Sigmoid colon (tissue), 7 donors: ENCODE measurements at regions of chr18 and their contacts with region 1.

Region 1: GRCh38 chr18:63320046-63320689 is 599 bp upstream of the BCL2 start:
- DNase-seq: peak; percentile 94
- H3K4me3 ChIP-seq: peak overlapping the region; percentile 26 to 75 (median 68)
- H3K27ac ChIP-seq: peak overlapping the region; percentile 86 to 90 (median 88)
- H3K4me1 ChIP-seq: peaks cover 0 to 47% (median 33%) of the 10 kb centered on the region in 4 donors
- H3K27me3 ChIP-seq: no peaks in the 10 kb centered on the region
- CTCF ChIP-seq: no peak
- EP300 ChIP-seq: no peak
- POLR2A ChIP-seq: no peak

Region 2: DNA sequence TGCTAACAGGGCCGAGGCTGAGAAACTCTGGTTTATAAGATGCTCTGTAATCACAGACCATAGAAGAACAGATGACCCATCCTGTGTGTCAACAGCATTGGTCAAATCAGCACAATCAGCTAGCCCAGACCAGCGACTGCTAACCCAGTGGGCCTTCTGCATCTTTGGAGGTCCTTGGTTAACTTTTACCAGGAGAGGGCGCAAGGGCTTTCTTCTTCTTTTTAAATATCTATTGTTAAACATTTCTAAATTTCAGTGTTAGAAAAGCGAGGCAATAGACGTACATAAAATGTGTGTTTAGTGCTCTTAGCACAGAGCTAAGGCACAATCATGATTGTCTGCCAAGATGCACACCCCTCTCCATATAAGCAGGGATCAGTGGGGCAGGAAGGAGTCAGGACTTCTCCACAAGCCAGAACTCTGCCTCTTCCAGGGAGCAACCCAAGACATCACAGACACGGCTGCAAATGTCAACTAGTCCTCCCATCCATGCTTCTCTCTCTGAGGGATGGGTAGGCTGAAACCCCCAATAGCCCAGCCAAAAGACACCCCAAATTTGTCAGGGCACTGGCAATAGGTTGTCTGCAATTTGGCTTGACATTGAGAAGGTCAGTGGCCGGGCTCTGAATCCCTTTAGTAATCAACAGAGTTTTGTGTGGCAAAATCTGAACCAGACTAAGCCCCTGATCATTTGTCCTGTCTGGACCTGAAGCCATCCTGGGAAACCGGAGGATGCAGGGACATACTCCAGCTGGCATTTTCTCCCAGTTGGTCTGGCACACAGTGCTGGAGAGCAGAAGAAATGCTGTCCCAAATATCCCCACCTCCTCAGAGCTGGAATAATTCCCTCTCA is 188.8 kb before region 1 on chr18:
- intact Hi-C with region 1: loop called (anchors 1 kb)
- DNase-seq: peak; percentile 73
- H3K4me3 ChIP-seq: no peak overlapping the region
- H3K27ac ChIP-seq: peak overlapping the region in 1 of 4 donors; percentile 31
- H3K4me1 ChIP-seq: peaks cover 0 to 11% (median 9%) of the 10 kb centered on the region in 4 donors
- H3K27me3 ChIP-seq: no peaks in the 10 kb centered on the region
- CTCF ChIP-seq: peak; percentile 23 to 72 (median 63)
- EP300 ChIP-seq: no peak
- POLR2A ChIP-seq: no peak

Region 3: GRCh38 chr18:63177919-63178821 is 142.0 kb before region 1 on chr18:
- intact Hi-C with region 1: loop called (anchors 5 kb)
- DNase-seq: peak; percentile 95
- H3K4me3 ChIP-seq: peak overlapping the region; percentile 2 to 26 (median 25)
- H3K27ac ChIP-seq: peak overlapping the region in 3 of 4 donors; percentile 69 to 79 (median 69)
- H3K4me1 ChIP-seq: peaks cover 0 to 48% (median 45%) of the 10 kb centered on the region in 4 donors
- H3K27me3 ChIP-seq: no peaks in the 10 kb centered on the region
- CTCF ChIP-seq: no peak
- EP300 ChIP-seq: no peak
- POLR2A ChIP-seq: no peak

Region 4: DNA sequence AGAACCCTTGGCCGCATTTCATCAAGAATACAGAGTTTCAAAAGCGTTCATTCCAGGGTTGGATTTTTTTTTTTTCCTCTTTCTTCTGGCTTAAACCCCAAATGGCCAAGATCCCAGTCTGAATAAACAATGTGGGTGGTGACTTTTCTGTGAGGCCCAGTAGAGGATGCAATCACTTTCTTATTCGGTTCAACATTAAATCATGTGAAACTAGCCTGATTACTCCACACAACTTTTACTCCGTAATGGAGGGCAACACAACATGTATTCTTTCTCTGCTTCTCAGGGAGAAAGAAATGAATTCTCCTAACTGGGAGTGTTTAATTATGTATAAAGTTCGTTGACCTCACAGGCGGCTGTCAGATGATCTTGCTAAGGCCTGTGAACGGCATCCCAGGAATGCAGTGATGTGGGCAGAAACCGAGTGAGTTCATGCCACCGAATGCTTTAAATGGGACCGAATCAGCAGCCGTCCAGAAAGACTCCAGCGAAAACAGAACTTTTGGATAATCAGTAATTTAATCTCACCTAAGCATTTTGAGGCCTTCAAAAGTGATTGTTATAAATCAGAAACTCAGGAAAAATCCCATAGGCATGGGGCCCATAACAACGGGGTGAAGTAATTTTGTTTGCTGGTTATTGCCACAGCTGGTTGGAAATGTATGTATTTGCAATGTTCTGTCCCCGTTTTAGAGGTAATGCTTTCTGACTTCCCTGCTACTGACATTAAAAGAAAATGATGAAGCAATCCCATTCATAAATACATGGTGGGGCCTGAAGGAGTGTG is 82.1 kb before region 1 on chr18:
- intact Hi-C with region 1: loop called (anchors 5 kb)
- DNase-seq: no peak
- H3K4me3 ChIP-seq: peak overlapping the region in 2 of 4 donors; percentile 14 to 17
- H3K27ac ChIP-seq: peak overlapping the region; percentile 78 to 88 (median 84)
- H3K4me1 ChIP-seq: peaks cover 0 to 34% (median 24%) of the 10 kb centered on the region in 4 donors
- H3K27me3 ChIP-seq: no peaks in the 10 kb centered on the region
- CTCF ChIP-seq: no peak
- EP300 ChIP-seq: peak in 1 of 4 donors; percentile 27
- POLR2A ChIP-seq: no peak

Region 5: DNA sequence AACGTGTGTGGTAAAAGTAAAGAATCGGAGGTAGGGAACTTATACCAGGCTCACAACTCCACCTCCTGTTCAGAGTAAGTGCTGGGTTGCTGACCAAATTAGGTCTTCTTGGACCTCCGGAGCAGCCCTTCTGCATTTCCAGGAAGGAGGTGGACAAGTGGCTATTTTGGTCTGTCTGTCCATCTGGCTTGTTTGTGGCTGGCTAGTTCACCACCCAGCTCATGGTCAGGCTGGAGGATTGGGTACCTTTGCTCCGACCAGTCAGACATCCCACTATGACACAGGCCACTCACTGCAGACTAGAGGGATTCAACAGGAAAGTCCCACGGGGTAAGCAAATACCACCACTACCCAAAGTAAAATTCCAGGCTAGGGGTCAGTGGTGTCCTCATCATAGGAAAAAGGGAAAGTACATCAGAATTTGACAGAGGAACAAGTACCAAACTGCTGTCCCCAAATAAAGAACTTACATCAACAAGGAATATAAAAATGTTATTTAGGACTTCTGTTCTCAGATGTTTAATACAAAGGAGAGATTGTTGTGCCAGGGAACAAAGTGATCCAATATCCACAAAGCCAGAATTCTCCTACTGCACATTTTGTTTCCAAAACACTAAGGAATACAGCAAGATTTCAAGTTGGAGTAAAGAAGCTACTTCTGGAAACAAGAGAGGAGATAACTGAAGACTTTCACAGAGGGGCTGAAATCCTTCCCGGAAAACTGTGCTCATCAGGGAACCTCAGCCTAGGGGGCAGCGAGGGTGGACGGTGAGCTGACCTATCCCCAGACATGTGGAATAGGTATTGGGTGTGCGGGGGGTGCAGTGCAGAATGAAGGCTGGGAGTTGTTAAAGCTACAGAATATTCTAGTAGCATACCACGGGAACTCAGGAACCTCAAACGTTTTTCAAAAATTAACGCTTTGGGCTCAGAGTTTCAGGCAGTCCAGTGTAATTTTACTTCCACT is 57.5 kb before region 1 on chr18:
- intact Hi-C with region 1: loop called (anchors 2 kb)
- DNase-seq: peak; percentile 79
- H3K4me3 ChIP-seq: peak overlapping the region in 2 of 4 donors; percentile 6 to 7
- H3K27ac ChIP-seq: peak overlapping the region; percentile 71 to 85 (median 77)
- H3K4me1 ChIP-seq: peaks cover 0 to 44% (median 27%) of the 10 kb centered on the region in 4 donors
- H3K27me3 ChIP-seq: no peaks in the 10 kb centered on the region
- CTCF ChIP-seq: peak in 1 of 4 experiments; percentile 15
- EP300 ChIP-seq: peak in 3 of 4 donors; percentile 45 to 66 (median 48)
- POLR2A ChIP-seq: no peak

Region 6: GRCh38 chr18:63422087-63422809 is 102.1 kb after region 1 on chr18 and contains the start of gene VPS4B:
- intact Hi-C with region 1: loop called (anchors 5 kb)
- DNase-seq: peak; percentile 100
- H3K4me3 ChIP-seq: peak within 1 kb of the TSS; percentile 68 to 89 (median 84)
- H3K27ac ChIP-seq: peak within 1 kb of the TSS; percentile 90 to 96 (median 92)
- H3K4me1 ChIP-seq: peaks cover 0 to 18% (median 15%) of the 10 kb centered on the region in 4 donors
- H3K27me3 ChIP-seq: no peaks in the 10 kb centered on the region
- CTCF ChIP-seq: no peak
- EP300 ChIP-seq: peak in 2 of 4 donors; percentile 51 to 81
- POLR2A ChIP-seq: peak; percentile 43 to 78
- total RNA-seq, gene VPS4B: 31.4 to 41.0 (median 38.3) TPM